ENCODE measurements at regions of chr14 and their contacts with region 1.

Region 1: DNA sequence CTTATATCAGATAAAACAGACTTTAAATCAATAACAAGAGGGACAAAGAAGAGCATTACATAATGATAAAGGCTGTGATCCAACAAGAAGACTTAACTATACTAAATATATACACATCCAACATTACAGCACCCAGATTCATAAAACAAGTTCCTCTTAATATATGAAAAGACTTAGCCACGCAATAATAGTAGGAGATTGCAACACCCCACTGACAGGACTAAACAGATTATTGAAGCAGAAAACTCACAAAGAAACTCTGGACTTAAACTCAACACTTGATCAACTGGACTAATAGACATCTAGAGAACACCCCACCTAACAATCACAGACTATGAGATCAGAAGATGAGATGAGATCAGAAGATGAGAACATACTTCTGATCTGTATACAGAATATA is 5.7 kb upstream of the CLEC14A start:
- DNase-seq: no peak
- H3K4me3 ChIP-seq: no peak overlapping the region
- H3K27ac ChIP-seq: no peak overlapping the region
- H3K4me1 ChIP-seq: no peaks in the 10 kb centered on the region
- H3K27me3 ChIP-seq: no peaks in the 10 kb centered on the region
- CTCF ChIP-seq: no peak

Region 2: DNA sequence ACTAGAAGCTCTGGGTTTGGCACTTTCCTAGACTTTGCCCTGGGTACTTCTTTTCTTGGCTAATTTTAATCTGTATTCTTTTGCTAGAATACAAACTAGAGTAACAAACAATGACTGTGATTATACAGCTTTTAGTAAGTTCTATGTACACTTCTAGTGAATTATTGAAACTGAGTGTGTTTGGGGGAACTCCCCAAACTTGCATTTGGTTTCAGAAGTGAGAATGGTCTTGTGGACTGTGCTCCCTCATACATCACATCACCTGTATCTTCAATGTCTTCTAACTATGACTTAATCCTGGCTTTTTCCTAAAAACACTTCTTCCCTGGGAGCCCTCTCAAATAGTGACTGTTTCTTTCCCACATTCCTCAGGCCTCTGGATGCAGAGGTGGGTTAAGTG is 77.5 kb before region 1 on chr14:
- CTCF ChIA-PET with region 1: no interaction called
- dilution Hi-C with region 1: loop called (anchors 5 kb)
- in situ Hi-C with region 1: no loop called
- intact Hi-C with region 1: no loop called
- DNase-seq: no peak
- H3K4me3 ChIP-seq: no peak overlapping the region
- H3K27ac ChIP-seq: no peak overlapping the region
- H3K4me1 ChIP-seq: no peaks in the 10 kb centered on the region
- H3K27me3 ChIP-seq: no peaks in the 10 kb centered on the region
- CTCF ChIP-seq: no peak

Region 3: GRCh38 chr14:39138440-39138839 is 876.8 kb after region 1 on chr14:
- CTCF ChIA-PET with region 1: no interaction called
- dilution Hi-C with region 1: no loop called
- in situ Hi-C with region 1: no loop called
- intact Hi-C with region 1: no loop called
- DNase-seq: no peak
- H3K4me3 ChIP-seq: no peak overlapping the region
- H3K27ac ChIP-seq: no peak overlapping the region
- H3K4me1 ChIP-seq: no peaks in the 10 kb centered on the region
- H3K27me3 ChIP-seq: no peaks in the 10 kb centered on the region
- CTCF ChIP-seq: no peak

Measured in mammary epithelial cell (primary cell).